Activated T-helper 1 cell treated with anti-CD3 and anti-CD28 coated beads, Interleukin-12 subunit alpha, Interleukin-12 subunit beta, Interleukin-2, Interleukin-4 antibody, amounts not matched to agents 30 ng/mL and 10 ng/mL and 1 ng/mL, durations not matched to agents 14 hours and 24 hours and 36 hours (primary cell): ENCODE measurements at regions of chrX and their contacts with region 1.

Region 1: DNA sequence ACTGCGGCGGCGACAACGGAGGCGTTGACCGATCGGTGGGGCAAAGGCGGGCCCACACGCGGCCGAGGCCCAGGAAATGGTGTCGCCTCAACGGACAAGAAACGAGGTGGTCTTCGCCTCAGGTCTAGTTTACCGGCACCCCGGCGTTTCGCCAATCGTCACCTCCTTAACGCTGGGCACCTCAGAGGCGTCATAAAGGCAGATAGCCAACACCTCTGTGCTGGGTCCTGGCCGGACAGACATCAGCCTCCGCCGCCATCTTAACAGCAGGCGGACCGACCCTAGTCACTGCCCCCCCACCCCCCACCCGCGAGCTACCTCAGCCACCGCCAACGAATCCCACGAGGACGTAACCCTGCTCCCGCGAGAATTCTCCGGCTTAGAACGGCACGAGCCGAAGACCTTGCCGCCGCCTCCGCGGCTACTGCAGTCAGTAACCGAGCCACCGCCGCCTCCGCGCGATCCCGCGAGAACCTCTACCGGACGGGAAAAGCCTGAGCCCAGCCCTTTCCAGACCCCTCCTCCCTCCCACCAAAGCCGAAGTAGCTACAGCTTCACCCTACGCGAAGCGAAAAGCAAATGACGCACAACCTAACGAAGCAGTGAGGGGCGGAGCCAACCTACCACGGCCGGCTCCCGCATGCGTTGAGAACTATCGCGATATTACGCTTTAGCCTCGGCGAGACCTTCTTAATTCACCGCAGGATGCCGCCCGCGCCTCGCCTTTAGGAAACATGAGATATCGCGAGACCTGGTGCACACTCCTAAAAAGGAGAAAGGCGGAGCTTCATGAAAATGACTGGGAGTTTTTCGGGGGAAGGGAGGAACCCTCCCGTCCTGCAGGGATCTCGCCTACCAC is 2.7 kb downstream of the HUWE1 start:
- DNase-seq: peak; percentile 88
- H3K4me3 Mint-ChIP-seq: peak overlapping the region; percentile 91
- H3K27ac Mint-ChIP-seq: peak overlapping the region; percentile 93
- H3K4me1 Mint-ChIP-seq: peaks cover 31% of the 10 kb centered on the region
- H3K27me3 Mint-ChIP-seq: no peaks in the 10 kb centered on the region

Region 2: GRCh38 chrX:53422086-53422860 is 261.5 kb before region 1 on chrX and contains the start of gene SMC1A:
- intact Hi-C with region 1: loop called (anchors 1 kb)
- DNase-seq: peak; percentile 93
- H3K4me3 Mint-ChIP-seq: peak within 1 kb of the TSS; percentile 97
- H3K27ac Mint-ChIP-seq: peak within 1 kb of the TSS; percentile 95
- H3K4me1 Mint-ChIP-seq: peaks cover 35% of the 10 kb centered on the region
- H3K27me3 Mint-ChIP-seq: no peaks in the 10 kb centered on the region
- total RNA-seq, gene SMC1A: 122 and 138 TPM in 2 replicates

Region 3: DNA sequence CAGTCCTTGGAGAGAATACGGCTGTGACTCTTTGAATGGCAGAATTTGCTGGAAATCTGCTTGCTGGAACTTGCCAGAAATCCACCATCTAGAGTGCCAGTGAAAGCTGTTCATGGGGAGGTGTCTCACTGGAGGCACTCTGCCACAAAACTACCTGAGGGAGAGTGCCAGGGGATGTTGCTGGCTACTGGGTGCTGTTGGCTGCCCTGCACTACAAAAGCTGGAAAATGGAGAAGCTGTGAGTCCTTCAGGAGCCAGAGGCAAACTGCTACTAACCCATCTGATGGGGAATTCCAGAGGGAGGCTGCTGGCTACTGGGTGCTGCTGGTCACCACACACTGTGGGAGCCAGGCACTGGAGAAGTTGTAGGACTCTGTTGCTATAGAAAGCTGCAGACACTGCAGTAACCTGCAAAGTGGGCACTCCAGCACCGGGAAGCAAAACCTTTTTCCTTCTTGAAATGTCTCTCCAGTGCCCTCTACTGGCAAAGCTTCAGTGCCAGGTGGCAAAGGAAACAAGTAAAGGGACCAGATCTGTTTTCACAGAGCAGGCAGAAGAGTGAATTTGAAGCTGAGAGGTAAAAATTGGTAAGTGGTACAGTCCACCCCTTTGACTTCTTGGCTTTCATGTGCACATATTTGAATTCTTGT is 201.8 kb before region 1 on chrX:
- intact Hi-C with region 1: no loop called
- DNase-seq: peak; percentile 20
- H3K4me3 Mint-ChIP-seq: no peak overlapping the region
- H3K27ac Mint-ChIP-seq: no peak overlapping the region
- H3K4me1 Mint-ChIP-seq: no peaks in the 10 kb centered on the region
- H3K27me3 Mint-ChIP-seq: peaks cover 9% of the 10 kb centered on the region

Region 4: GRCh38 chrX:53714580-53715345 is 31.0 kb after region 1 on chrX:
- intact Hi-C with region 1: loop called (anchors 1 kb)
- DNase-seq: peak; percentile 70
- H3K4me3 Mint-ChIP-seq: peak overlapping the region; percentile 88
- H3K27ac Mint-ChIP-seq: peak overlapping the region; percentile 99
- H3K4me1 Mint-ChIP-seq: peaks cover 52% of the 10 kb centered on the region
- H3K27me3 Mint-ChIP-seq: no peaks in the 10 kb centered on the region

Region 5: DNA sequence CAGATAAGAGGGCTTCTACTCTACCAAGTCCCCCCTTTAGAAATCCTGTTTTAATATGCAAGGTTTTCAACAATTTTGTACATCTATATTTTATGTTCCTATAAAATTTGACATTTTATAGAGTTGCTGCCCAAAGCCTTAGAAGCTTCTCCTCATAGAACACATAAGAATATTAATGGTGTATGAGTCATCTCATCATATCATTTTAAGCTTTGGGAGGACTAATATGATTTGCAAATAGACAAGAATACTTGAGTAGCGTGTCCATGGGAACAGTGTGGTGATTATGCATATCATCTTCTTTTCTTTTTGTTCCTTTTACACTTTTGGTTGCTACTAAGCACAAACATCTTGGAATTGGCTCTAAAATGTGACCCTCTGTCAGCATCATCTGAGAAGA is 59.5 kb after region 1 on chrX:
- intact Hi-C with region 1: loop called (anchors 5 kb)
- DNase-seq: no peak
- H3K4me3 Mint-ChIP-seq: no peak overlapping the region
- H3K27ac Mint-ChIP-seq: no peak overlapping the region
- H3K4me1 Mint-ChIP-seq: peaks cover 17% of the 10 kb centered on the region
- H3K27me3 Mint-ChIP-seq: no peaks in the 10 kb centered on the region

Region 6: GRCh38 chrX:54044126-54044876 is 360.5 kb after region 1 on chrX and contains the start of gene PHF8:
- intact Hi-C with region 1: loop called (anchors 1 kb)
- DNase-seq: peak; percentile 91
- H3K4me3 Mint-ChIP-seq: peak within 1 kb of the TSS; percentile 92
- H3K27ac Mint-ChIP-seq: peak within 1 kb of the TSS; percentile 98
- H3K4me1 Mint-ChIP-seq: peaks cover 18% of the 10 kb centered on the region
- H3K27me3 Mint-ChIP-seq: no peaks in the 10 kb centered on the region
- total RNA-seq, gene PHF8: 50.7 and 54.8 TPM in 2 replicates

Region 7: GRCh38 chrX:54529552-54530357 is 846.0 kb after region 1 on chrX and contains the start of gene GNL3L:
- intact Hi-C with region 1: loop called (anchors 10 kb)
- DNase-seq: peak; percentile 69
- H3K4me3 Mint-ChIP-seq: peak within 1 kb of the TSS; percentile 95
- H3K27ac Mint-ChIP-seq: peak within 1 kb of the TSS; percentile 94
- H3K4me1 Mint-ChIP-seq: peaks cover 26% of the 10 kb centered on the region
- H3K27me3 Mint-ChIP-seq: no peaks in the 10 kb centered on the region
- total RNA-seq, gene GNL3L: 75.5 and 76.1 TPM in 2 replicates

Region 8: GRCh38 chrX:54808605-54809483 is 1125.1 kb after region 1 on chrX:
- intact Hi-C with region 1: loop called (anchors 5 kb)
- DNase-seq: peak; percentile 88
- H3K4me3 Mint-ChIP-seq: peak overlapping the region; percentile 89
- H3K27ac Mint-ChIP-seq: peak overlapping the region; percentile 85
- H3K4me1 Mint-ChIP-seq: peaks cover 17% of the 10 kb centered on the region
- H3K27me3 Mint-ChIP-seq: peaks cover 10% of the 10 kb centered on the region